Activated T-helper 2 cell treated with anti-CD3 and anti-CD28 coated beads, Interferon-gamma antibody, Interleukin-2, Interleukin-4, amounts not matched to agents 10 μg/mL and 5 μg/mL and 100 μg/mL, durations not matched to agents 14 hours and 24 hours and 36 hours (primary cell): ENCODE measurements at regions of chr2 and their contacts with region 1.

Region 1: DNA sequence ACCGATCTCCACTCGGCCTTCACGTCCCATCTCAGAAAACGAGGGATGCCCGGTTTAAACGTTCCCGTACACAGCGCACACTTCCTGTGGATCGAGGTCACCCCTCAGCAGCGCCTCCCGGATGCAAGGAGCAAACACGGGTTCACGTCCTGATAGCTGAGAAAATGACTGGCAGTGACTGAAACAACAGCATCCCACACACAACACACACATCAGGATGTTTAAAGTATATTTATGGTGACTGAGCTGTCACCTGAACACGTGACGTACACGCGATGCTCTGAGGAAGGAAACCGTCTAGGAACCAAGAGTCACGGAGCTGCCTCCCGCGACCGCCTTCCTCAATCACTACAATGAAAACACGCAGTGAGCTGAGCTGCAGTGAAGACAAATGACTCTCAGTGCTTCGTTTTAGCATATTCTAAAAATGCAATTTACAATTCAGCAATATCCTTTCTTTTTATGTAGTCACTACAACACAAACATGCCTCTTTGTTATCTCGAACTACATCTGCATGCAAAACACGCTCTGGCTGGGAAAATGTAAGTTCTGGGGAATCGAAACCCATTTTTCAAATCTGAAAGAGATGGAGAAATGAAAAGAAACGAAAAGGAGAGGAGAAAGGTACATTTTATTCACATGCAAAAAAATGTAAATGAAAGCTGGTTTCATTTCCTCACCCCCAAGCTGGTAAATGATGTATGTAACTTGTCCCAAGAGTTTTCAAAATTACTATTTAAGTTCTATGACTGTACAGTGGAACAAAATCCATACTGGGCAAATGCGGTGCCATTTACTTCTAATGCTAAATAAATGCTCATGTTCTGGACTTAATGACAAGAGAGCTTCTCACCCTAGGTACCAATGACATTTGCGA is 19.8 kb downstream of the HDAC4 start:
- DNase-seq: peak; percentile 61
- H3K4me3 Mint-ChIP-seq: peak overlapping the region; percentile 73
- H3K27ac Mint-ChIP-seq: peak overlapping the region; percentile 97
- H3K4me1 Mint-ChIP-seq: peaks cover 21% of the 10 kb centered on the region
- H3K27me3 Mint-ChIP-seq: no peaks in the 10 kb centered on the region

Region 2: DNA sequence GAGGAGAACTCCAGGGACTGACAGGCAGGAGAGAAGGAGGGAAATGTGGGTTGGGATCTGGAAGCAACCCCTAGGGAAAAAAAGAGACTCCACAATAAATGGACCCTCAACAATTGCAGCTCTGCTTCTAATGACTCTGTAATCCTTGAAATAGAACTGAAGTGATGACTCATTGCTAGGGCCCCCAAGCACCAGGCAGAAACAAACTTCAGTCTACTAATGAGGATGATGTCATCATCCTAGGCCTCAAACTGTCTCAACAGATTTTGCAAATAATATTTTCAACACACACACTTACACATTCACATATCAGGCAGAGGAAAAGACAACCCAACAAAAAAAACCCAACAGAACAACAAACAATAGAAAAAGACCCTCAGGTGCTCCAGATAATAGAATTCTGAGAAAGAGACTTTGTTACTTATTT is 123.5 kb before region 1 on chr2:
- intact Hi-C with region 1: loop called (anchors 2 kb)
- DNase-seq: no peak
- H3K4me3 Mint-ChIP-seq: peak overlapping the region; percentile 42
- H3K27ac Mint-ChIP-seq: peak overlapping the region; percentile 85
- H3K4me1 Mint-ChIP-seq: peaks cover 85% of the 10 kb centered on the region
- H3K27me3 Mint-ChIP-seq: no peaks in the 10 kb centered on the region

Region 3: GRCh38 chr2:239288951-239289511 is 92.0 kb before region 1 on chr2:
- intact Hi-C with region 1: loop called (anchors 1 kb)
- DNase-seq: peak; percentile 48
- H3K4me3 Mint-ChIP-seq: peak overlapping the region; percentile 72
- H3K27ac Mint-ChIP-seq: peak overlapping the region; percentile 98
- H3K4me1 Mint-ChIP-seq: peaks cover 65% of the 10 kb centered on the region
- H3K27me3 Mint-ChIP-seq: no peaks in the 10 kb centered on the region

Region 4: GRCh38 chr2:239369631-239370161 is 11.4 kb before region 1 on chr2:
- intact Hi-C with region 1: loop called (anchors 1 kb)
- DNase-seq: peak; percentile 72
- H3K4me3 Mint-ChIP-seq: peak overlapping the region; percentile 78
- H3K27ac Mint-ChIP-seq: peak overlapping the region; percentile 95
- H3K4me1 Mint-ChIP-seq: peaks cover 11% of the 10 kb centered on the region
- H3K27me3 Mint-ChIP-seq: no peaks in the 10 kb centered on the region

Region 5: DNA sequence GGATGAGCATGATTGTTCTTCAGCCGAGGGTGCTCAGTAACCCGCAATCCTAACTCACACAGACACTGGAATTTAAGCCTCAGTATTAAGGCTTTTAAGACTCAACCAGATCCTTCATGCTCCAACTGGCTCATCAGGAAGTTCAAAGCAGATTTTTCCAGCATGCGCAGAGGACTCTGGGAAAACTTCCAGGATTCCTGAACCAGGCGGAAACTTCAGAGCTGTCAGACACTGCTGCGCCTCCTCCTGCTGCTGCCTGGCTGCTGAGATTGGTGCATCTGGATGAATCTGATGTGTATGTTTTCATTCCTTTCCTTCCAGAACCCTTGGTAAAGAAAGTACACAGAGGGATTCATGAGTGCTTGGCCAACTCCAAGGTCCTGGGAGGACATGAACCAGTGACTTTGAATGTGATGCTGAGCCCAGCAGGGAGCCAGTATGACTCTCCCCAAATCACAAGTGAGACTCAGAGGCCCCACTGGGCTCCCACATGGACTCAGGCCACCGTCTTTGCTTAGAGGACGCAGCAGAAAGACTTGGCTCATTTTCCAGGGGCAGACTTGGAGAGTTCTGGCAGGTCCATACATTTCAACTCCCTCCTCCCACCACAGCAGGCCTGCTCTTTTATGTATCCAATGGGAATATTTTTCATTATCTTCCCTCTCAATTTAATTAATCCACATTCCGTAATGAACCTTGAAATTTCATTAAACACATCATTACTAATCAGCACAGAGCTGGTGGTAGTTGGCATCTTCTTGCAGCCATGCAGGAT is 163.3 kb after region 1 on chr2:
- intact Hi-C with region 1: loop called (anchors 5 kb)
- DNase-seq: no peak
- H3K4me3 Mint-ChIP-seq: no peak overlapping the region
- H3K27ac Mint-ChIP-seq: peak overlapping the region; percentile 61
- H3K4me1 Mint-ChIP-seq: peaks cover 49% of the 10 kb centered on the region
- H3K27me3 Mint-ChIP-seq: peaks cover 8% of the 10 kb centered on the region